H1 (cell line): ENCODE measurements at regions of chr2 and their contacts with region 1.

Region 1: GRCh38 chr2:74399785-74400184 is 19.7 kb upstream of the DCTN1 start:
- DNase-seq: no peak
- H3K4me3 ChIP-seq: no peak overlapping the region
- H3K27ac ChIP-seq: no peak overlapping the region
- H3K4me1 ChIP-seq: peaks cover 0 to 3% (median 0%) of the 10 kb centered on the region in 4 experiments; a peak in 1 of 7 replicates
- H3K27me3 ChIP-seq: no peaks in the 10 kb centered on the region
- CTCF ChIP-seq: peak in 2 of 3 experiments; percentile 51 to 61; a peak in 3 of 4 replicates
- EP300 ChIP-seq: no peak
- POLR2A ChIP-seq: no peak
- RAD21 ChIP-seq: peak; percentile 65 to 66

Region 2: GRCh38 chr2:74181739-74182138 is 218.0 kb before region 1 on chr2:
- CTCF ChIA-PET with region 1: no interaction called
- POLR2A ChIA-PET with region 1: no interaction called
- DNase-seq: no peak
- H3K4me3 ChIP-seq: no peak overlapping the region
- H3K27ac ChIP-seq: no peak overlapping the region
- H3K4me1 ChIP-seq: peaks cover 0 to 5% (median 2%) of the 10 kb centered on the region in 4 experiments; a peak in 3 of 7 replicates
- H3K27me3 ChIP-seq: no peaks in the 10 kb centered on the region
- CTCF ChIP-seq: no peak
- EP300 ChIP-seq: no peak
- POLR2A ChIP-seq: no peak
- RAD21 ChIP-seq: no peak

Region 3: DNA sequence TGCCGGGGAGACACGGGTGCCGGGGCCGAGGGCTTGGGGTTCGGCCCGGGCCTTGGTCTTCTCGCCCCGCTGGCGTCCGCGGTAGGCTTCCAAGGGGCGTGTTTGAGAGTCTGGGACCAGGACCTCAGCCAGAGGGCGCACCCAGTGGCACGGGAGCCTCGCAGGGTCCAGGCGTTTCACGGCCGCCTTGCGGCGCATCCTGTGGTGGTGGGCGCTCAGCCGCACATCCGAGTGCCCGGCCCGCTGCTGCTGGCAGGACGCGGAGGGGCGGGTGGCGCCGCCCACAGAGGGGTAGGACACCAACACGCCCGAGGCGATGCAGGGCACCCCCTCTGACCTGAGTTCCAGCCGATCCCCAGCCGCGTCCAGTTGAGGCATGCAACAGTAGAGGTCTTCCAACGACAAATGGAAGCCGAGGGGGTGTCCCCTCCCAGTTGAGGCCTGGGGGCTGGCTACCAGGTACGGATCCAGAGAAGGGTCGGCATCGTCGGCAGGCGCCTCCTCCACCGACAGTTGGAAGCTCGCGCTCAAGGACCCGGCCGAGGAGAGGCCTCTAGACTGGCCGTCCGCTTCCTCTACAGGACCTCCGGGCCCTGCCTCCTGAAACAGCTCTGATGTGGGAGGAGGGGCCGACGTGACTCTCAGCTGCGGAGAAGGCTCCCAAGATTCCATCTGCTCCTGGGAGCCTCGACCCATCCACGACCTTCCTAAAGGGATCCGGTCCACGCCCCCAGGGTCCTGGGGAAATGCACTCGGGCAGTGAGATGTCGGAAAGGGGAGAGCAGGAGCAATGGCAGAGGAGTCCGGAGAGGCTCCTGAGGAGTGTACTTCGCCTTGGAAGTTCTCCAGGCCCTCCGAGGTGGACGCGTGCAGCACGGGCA is 15.3 kb after region 1 on chr2:
- CTCF ChIA-PET with region 1: interaction called, 19 read pairs
- POLR2A ChIA-PET with region 1: no interaction called
- DNase-seq: no peak
- H3K4me3 ChIP-seq: no peak overlapping the region; a peak in 1 of 8 replicates
- H3K27ac ChIP-seq: no peak overlapping the region
- H3K4me1 ChIP-seq: peaks cover 0 to 13% (median 0%) of the 10 kb centered on the region in 4 experiments; a peak in 3 of 7 replicates
- H3K27me3 ChIP-seq: no peaks in the 10 kb centered on the region
- CTCF ChIP-seq: no peak
- EP300 ChIP-seq: no peak
- POLR2A ChIP-seq: no peak
- RAD21 ChIP-seq: no peak

Region 4: GRCh38 chr2:74507145-74507925 is 107.5 kb after region 1 on chr2 and contains the start of gene PCGF1:
- CTCF ChIA-PET with region 1: no interaction called
- POLR2A ChIA-PET with region 1: no interaction called
- DNase-seq: peak; percentile 96 to 98
- H3K4me3 ChIP-seq: peak within 1 kb of the TSS; percentile 61 to 98 (median 92)
- H3K27ac ChIP-seq: peak within 1 kb of the TSS; percentile 99
- H3K4me1 ChIP-seq: peaks cover 3 to 25% (median 20%) of the 10 kb centered on the region in 4 experiments
- H3K27me3 ChIP-seq: peaks cover 48 to 80% (median 76%) of the 10 kb centered on the region in 4 experiments
- CTCF ChIP-seq: peak in 2 of 3 experiments; percentile 48 to 63; a peak in 3 of 4 replicates
- EP300 ChIP-seq: no peak
- POLR2A ChIP-seq: peak in 1 of 2 experiments; percentile 84; a peak in 2 of 3 replicates
- RAD21 ChIP-seq: peak; percentile 9 to 28; a peak in 1 of 4 replicates
- total RNA-seq, gene PCGF1: 10.0 and 13.8 TPM in 2 replicates